Activated CD4-positive, alpha-beta T cell treated with anti-CD3 and anti-CD28 coated beads, Interleukin-2, amount 10 ng/mL, durations not matched to agents 7 days and 5 days (primary cell): ENCODE measurements at regions of chr1 and their contacts with region 1.

Region 1: DNA sequence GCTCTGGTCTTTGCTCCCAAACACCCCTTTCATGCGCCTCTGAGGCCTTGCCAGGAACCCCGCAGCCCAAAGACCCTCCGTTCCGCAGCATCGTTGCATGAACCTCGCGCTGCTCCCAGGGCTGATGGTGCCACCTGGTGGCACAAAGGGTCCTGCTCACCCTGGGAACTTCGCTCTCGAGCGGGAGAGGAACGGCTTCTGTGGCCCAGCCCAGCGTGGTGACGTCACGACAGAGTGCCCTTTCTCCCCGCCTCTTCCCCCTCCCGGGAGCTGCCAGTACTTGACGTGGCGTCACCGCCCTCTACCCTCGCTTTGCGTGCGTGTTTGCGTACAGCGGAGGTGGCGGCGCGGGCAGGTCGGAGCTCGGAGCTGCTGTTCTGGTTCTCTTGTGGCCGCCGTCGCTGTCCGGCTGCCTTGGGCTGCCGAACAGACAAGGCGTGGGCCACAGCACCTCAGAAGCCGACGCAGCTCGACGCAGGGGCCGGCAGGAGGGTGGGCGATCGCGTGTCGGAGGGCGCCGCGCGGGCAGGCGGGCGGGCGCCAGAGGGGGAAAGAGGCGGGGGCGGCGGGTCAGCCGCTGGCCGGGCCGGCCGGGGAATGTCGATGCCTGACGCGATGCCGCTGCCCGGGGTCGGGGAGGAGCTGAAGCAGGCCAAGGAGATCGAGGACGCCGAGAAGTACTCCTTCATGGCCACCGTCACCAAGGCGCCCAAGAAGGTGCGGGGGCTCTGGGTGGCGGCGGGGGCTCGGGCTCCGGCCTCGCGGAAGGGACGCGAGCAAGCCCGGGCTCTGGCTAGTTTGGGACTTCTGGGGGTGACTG is at the start of gene AHCYL1:
- DNase-seq: peak; percentile 100
- H3K4me3 Mint-ChIP-seq: peak within 1 kb of the TSS; percentile 89
- H3K27ac Mint-ChIP-seq: peak within 1 kb of the TSS; percentile 97
- H3K4me1 Mint-ChIP-seq: peaks cover 39% of the 10 kb centered on the region
- H3K27me3 Mint-ChIP-seq: peaks cover 2% of the 10 kb centered on the region
- total RNA-seq, gene AHCYL1: 50.4 to 50.9 TPM

Region 2: DNA sequence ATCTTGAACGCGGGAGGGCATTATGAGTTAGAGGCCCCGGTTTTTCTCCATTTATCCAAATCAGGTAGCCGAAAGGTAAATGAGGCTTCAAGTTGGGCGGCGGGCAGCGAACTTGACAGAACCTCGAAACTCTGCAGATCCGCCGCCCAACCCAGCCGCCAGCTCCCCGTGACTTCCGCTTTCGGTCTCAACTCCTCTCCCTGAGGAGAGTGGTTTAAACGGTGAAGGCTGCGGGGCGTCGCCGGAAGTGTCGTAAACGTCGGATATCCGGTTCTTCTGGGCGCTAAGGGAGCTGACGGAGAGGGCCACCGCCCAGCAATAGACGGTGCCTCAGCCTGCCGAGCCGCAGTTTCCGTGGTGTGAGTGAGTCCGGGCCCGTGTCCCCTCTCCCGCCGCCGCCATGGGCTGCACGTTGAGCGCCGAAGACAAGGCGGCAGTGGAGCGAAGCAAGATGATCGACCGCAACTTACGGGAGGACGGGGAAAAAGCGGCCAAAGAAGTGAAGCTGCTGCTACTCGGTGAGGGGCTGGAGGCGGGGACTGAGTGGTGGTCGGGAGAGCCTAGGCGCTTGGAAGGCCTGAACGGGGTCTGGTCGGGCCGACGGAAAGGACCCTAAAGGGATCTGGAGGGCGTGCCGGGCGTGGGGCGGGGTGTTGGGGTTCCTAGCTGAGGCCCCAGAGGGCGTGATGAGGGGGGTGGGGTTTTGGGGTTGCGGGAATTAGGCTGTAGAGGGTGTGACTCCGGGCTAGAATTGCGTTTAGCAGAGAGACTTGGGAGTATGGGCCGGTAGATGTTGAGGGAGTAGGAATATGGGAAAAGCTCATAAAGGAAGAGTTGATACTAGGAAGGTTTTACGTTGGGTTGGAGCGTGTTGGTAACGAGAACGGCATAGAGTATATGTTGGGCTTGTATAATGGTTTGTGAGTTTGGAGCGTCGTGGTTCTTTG is 436.1 kb before region 1 on chr1 and contains the start of gene GNAI3:
- CTCF ChIA-PET with region 1: interaction called, 19 read pairs
- POLR2A ChIA-PET with region 1: no interaction called
- DNase-seq: peak; percentile 98
- H3K4me3 Mint-ChIP-seq: peak within 1 kb of the TSS; percentile 96
- H3K27ac Mint-ChIP-seq: peak within 1 kb of the TSS; percentile 98
- H3K4me1 Mint-ChIP-seq: peaks cover 49% of the 10 kb centered on the region
- H3K27me3 Mint-ChIP-seq: no peaks in the 10 kb centered on the region
- total RNA-seq, gene GNAI3: 8.8 to 9.7 TPM

Region 3: DNA sequence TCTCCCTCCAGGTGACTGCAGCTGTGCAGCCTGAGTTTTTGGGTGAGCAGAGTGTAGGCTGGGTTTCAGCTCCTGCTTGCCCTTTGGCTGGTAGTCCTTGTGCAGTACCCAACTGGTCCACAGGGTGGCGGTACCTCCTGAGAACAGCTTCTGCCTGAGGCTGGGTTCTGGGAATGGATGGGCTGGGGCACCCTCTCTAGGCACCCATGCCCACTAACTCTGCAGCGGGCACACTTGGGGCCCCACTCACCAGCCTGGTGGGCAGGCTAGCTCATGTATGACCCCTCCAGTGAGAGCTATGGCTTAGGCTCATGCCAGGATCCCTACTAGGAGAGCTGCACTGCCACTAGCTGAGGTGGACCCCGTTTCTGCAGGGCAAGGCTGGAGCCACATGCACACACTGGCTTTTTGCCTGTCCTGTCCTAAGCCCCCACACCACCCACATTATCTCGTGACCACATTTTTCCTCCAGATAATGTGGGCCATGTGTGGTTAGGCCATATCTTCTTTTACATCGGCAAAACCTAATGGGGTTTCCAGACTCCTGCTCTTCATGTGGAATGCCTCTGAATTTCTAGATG is 344.3 kb before region 1 on chr1:
- CTCF ChIA-PET with region 1: interaction called, 54 read pairs
- POLR2A ChIA-PET with region 1: no interaction called
- DNase-seq: peak; percentile 93
- H3K4me3 Mint-ChIP-seq: no peak overlapping the region
- H3K27ac Mint-ChIP-seq: no peak overlapping the region
- H3K4me1 Mint-ChIP-seq: peaks cover 21% of the 10 kb centered on the region
- H3K27me3 Mint-ChIP-seq: no peaks in the 10 kb centered on the region

Region 4: GRCh38 chr1:109655601-109656519 is 328.8 kb before region 1 on chr1 and contains the start of gene GSTM4:
- CTCF ChIA-PET with region 1: interaction called, 26 read pairs
- POLR2A ChIA-PET with region 1: no interaction called
- DNase-seq: peak; percentile 76
- H3K4me3 Mint-ChIP-seq: peak within 1 kb of the TSS; percentile 82
- H3K27ac Mint-ChIP-seq: peak within 1 kb of the TSS; percentile 91
- H3K4me1 Mint-ChIP-seq: peaks cover 26% of the 10 kb centered on the region
- H3K27me3 Mint-ChIP-seq: peaks cover 21% of the 10 kb centered on the region
- total RNA-seq, gene GSTM4: 34.3 to 36.3 TPM

Region 5: DNA sequence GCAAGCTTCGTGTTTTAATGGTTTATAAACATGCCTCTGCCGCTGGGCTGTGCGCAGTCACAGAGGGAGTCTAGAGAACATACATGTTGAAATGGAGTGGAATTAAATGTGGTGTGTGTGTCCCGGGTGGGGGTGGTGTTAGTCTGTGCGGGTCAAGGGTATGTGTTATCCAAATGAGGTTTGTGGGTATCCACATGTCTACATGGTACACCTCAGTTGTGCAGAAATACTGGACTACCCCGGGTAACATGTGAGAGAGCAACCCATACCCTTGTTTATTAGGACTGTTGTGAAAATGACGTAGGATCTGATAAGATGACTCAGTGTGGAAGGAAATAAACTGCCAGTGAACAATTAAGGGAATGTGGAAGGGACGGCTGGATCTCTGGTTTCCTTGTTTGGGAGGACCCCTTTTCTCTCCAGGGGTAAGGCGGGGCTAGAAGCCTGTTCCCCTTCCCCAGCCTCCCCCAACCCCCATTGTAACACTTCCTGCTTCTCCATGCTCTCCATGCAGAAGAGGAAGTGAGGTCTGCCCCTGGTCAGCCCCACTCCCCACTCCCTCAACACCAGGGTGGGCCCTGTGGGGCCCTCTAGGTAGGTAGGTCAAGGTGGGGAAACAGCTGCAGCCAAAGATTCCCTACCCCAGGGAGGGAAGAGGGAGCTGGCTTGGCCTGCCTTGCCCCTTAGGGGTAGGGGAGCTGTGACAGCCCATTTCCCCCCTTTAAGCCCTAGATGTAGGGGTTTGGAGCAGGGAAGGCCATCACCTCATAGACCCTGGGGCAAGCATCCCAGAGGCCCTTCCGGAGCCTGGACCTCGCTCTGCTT is 221.6 kb before region 1 on chr1:
- CTCF ChIA-PET with region 1: interaction called, 475 read pairs
- POLR2A ChIA-PET with region 1: no interaction called
- DNase-seq: no peak
- H3K4me3 Mint-ChIP-seq: no peak overlapping the region
- H3K27ac Mint-ChIP-seq: no peak overlapping the region
- H3K4me1 Mint-ChIP-seq: no peaks in the 10 kb centered on the region
- H3K27me3 Mint-ChIP-seq: no peaks in the 10 kb centered on the region

Region 6: DNA sequence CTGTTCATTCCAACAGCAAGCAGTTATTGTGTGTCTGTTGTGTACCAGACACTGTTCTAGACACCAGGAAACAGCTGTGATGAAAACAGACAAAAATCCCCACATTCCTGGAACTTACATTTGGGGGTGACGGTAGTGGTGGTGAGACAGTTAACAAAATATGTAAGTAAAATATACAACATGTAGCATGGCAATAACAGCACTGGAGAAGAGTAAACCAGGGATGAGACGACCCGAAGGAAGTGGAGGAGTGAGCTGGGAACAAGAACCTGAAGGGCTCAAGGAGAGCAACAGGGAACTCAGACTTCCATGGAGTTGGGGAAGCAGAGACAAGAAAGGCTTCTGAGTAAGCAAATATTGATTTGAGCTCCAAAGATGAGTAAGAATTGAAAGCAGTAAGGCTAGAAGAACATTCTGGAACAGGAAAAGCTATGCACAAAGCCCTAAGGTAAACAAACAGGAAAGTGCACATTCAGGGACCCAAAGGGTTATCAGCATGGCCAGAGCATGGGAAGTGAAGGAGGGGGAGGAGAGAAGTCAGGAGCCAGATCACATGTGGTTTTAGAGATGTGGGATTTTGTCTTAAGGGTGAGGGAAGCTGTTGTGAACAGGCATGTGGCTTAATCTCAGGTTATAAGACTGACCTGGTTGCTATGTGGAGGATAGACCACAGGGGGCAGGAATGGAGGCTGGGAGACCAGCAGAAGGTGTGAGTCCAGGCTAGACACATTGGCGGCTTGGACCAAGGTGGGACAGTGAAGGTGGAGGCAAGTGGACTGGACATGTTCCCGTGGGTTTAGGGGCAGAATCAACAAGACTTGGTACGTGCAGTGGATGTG is 66.7 kb before region 1 on chr1:
- CTCF ChIA-PET with region 1: interaction called, 28 read pairs
- POLR2A ChIA-PET with region 1: no interaction called
- DNase-seq: no peak
- H3K4me3 Mint-ChIP-seq: no peak overlapping the region
- H3K27ac Mint-ChIP-seq: no peak overlapping the region
- H3K4me1 Mint-ChIP-seq: peaks cover 15% of the 10 kb centered on the region
- H3K27me3 Mint-ChIP-seq: no peaks in the 10 kb centered on the region

Region 7: DNA sequence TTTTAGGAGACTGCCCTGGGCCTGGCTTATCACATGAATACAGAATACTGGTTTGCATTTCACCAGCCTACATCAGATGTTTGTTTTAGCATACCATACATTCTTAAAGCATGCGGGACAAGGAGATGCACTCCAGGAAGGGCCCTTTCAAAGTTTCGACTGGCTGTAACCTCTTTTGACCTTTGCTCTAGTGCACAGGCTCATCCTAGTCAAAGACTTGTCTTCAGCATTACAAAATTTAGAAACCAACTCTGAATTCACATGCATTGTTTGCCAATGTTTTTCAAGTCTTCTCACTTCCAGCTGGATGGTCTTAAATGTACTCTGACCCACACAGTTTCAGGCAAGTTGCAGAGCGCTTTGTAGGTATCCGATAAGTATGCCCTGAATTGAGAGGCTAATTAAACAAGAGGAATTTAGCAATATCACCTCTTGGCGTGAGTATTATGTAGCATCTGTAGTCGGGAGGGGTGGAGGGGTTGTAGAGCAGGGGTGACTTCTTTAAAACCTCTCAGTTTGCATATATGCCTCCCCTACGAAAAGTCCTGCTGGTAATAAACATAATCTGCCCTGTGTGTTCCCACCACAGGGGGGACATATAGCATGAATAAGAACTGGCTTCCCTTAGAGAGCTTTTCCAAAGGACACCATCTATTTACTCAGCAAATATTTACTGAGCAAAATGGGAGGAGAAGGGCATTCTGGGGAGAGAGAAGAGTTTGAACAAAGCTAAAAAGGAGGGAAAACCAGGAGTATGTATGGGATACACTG is 24.5 kb before region 1 on chr1:
- CTCF ChIA-PET with region 1: interaction called, 21 read pairs
- POLR2A ChIA-PET with region 1: no interaction called
- DNase-seq: no peak
- H3K4me3 Mint-ChIP-seq: no peak overlapping the region
- H3K27ac Mint-ChIP-seq: no peak overlapping the region
- H3K4me1 Mint-ChIP-seq: no peaks in the 10 kb centered on the region
- H3K27me3 Mint-ChIP-seq: peaks cover 23% of the 10 kb centered on the region